ENCODE measurements at regions of chr17 and their contacts with region 1.

Region 1: GRCh38 chr17:31738996-31739699 is 119.9 kb downstream of the COPRS start:
- DNase-seq: no peak
- H3K4me3 ChIP-seq: no peak overlapping the region
- CTCF ChIP-seq: no peak

Region 2: GRCh38 chr17:31724026-31724425 is 15.1 kb before region 1 on chr17:
- CTCF ChIA-PET with region 1: interaction called, 13 read pairs
- POLR2A ChIA-PET with region 1: no interaction called
- DNase-seq: no peak
- H3K4me3 ChIP-seq: no peak overlapping the region
- CTCF ChIP-seq: no peak

Region 3: DNA sequence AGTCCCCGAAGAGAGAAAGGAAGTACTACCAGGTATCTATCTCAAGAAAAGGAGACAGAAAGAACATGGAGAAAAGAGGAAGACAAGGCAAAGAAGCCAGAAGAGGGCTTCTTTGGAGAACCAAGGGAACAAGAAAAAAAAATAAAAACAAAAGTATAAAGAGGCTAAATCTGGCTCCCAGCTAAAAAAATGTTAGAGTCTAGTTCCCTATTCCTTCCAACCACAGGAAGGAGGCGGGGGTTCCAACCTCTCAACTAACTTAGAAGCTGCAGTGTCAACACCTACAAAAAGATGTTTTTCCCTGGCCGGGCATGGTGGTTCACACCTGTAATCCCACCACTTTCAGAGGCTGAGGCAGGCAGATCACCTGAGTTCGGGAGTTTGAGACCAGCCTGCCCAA is 149.0 kb after region 1 on chr17:
- CTCF ChIA-PET with region 1: no interaction called
- POLR2A ChIA-PET with region 1: no interaction called
- DNase-seq: no peak
- H3K4me3 ChIP-seq: no peak overlapping the region
- CTCF ChIP-seq: no peak